ENCODE measurements at regions of chr1 and their contacts with region 1.

Region 1: DNA sequence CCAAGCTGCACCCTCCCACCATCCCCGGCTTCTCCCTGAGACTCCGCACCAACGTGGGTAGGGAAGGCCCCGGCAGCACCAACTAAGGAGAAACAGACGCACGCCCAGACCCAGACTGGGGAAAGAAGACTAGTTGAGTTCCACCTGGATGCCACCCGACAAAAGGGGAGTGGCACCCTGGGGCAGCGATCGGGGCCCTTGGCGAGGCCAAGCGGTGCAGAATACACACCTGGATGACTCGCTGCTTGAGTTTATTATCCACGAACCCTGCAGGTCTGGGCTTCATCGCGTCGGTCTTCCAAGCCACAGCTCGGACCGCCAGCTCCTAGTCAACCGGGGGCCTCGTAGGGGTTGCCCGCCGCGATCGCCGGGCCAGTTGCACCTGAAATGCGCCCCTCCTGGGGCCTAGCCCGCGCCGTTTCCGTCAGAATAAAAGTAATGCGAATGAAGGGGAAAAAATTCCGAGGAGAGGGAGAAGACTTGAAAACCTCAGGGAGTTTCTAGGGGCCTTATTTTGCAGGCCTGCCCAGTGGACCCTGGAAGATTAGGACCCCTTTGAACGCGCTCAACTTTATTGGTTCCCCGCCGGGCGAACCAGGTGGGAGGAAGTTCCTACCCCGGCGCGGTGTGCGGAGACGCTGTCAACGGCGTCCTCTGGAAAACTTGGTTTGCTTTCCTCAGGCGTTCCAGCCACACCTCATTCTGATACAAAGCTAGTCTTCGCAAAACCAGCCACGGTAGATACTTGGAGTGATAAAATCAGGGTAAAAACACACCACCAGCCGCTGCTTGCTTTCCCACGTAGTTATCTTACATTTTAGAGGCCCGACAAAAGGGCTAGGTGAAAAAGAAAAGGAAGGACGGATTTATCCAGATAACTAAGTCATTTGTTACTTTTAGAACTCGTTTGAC is at the start of gene NVL:
- DNase-seq: peak; percentile 81 to 88
- H3K4me3 ChIP-seq: peak within 1 kb of the TSS; percentile 56 to 71 (median 62)
- H3K27ac ChIP-seq: peak within 1 kb of the TSS; percentile 88 to 100 (median 92)
- H3K4me1 ChIP-seq: peaks cover 17 to 22% of the 10 kb centered on the region in 2 donors
- H3K27me3 ChIP-seq: no peaks in the 10 kb centered on the region
- CTCF ChIP-seq: no peak
- POLR2A ChIP-seq: peak in 1 of 2 donors; percentile 47
- total RNA-seq, gene NVL: 18.9 to 34.1 (median 26.8) TPM

Region 2: GRCh38 chr1:224113918-224114786 is 215.9 kb before region 1 on chr1 and contains the start of gene FBXO28:
- intact Hi-C with region 1: loop called (anchors 5 kb)
- DNase-seq: peak; percentile 96 to 98
- H3K4me3 ChIP-seq: peak within 1 kb of the TSS; percentile 41 to 94 (median 90)
- H3K27ac ChIP-seq: peak within 1 kb of the TSS; percentile 78 to 93 (median 91)
- H3K4me1 ChIP-seq: peaks cover 15 to 21% of the 10 kb centered on the region in 2 donors
- H3K27me3 ChIP-seq: no peaks in the 10 kb centered on the region
- CTCF ChIP-seq: no peak
- POLR2A ChIP-seq: peak; percentile 32 to 94
- total RNA-seq, gene FBXO28: 32.5 to 64.7 (median 35.4) TPM

Region 3: GRCh38 chr1:224170365-224171112 is 159.6 kb before region 1 on chr1:
- intact Hi-C with region 1: loop called (anchors 10 kb)
- DNase-seq: peak; percentile 60 to 64
- H3K4me3 ChIP-seq: no peak overlapping the region
- H3K27ac ChIP-seq: no peak overlapping the region
- H3K4me1 ChIP-seq: no peaks in the 10 kb centered on the region
- H3K27me3 ChIP-seq: no peaks in the 10 kb centered on the region
- CTCF ChIP-seq: peak; percentile 25 to 74 (median 55)
- POLR2A ChIP-seq: no peak